Common myeloid progenitor, CD34-positive (primary cell): ENCODE measurements at regions of chr11 and their contacts with region 1.

Region 1: DNA sequence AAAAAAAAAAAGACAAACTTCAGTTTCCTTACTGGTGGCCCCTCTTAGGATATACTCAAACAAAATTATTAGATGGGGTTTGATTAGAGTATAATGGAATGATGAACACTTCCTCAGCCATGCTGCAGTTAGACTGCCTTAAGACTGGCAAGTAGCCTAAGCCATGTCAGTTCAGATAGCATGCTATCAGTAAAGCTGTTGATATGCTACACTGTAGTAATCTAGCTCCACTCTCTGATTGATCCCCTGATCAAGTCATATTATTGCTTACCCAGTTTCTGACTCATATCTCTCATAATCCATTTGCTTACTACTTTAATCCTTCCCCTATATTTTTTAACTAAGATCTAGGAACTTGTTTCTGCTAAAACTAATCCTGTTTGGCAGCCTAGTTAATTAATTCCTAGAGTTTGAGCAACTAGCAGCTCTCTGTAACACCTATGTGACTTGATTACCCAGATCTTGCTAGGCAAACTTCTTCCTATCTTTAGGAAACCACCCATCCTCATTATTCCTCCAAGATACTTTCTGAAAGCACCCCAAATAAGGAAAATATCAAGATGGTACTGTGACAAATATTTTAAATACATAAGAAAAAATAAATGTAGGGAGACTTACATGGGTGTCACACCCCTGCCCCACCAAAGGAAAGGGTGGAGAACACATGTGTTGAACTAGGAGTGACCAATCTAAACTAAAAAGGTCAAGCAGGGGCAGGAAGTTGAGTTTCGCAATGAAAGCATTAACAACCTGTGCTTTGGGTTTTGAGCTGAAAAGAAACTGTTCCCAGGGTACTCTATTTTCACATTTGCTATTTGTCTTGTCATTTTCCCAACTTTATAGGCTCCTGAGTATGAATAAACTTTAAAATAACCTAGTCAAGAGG is 43.2 kb downstream of the PIK3C2A start:
- DNase-seq: no peak
- H3K4me3 ChIP-seq: no peak overlapping the region
- H3K27ac ChIP-seq: no peak overlapping the region
- H3K4me1 ChIP-seq: peaks cover 12 to 57% (median 30%) of the 10 kb centered on the region in 4 experiments
- H3K27me3 ChIP-seq: no peaks in the 10 kb centered on the region

Region 2: GRCh38 chr11:17077240-17077519 is 87.4 kb before region 1 on chr11:
- CTCF ChIA-PET with region 1: no interaction called
- POLR2A ChIA-PET with region 1: no interaction called
- DNase-seq: peak; percentile 66 to 83 (median 75)
- H3K4me3 ChIP-seq: peak overlapping the region; percentile 86 to 100 (median 94)
- H3K27ac ChIP-seq: peak overlapping the region; percentile 95 to 98
- H3K4me1 ChIP-seq: peaks cover 11 to 30% (median 20%) of the 10 kb centered on the region in 4 experiments
- H3K27me3 ChIP-seq: no peaks in the 10 kb centered on the region

Region 3: DNA sequence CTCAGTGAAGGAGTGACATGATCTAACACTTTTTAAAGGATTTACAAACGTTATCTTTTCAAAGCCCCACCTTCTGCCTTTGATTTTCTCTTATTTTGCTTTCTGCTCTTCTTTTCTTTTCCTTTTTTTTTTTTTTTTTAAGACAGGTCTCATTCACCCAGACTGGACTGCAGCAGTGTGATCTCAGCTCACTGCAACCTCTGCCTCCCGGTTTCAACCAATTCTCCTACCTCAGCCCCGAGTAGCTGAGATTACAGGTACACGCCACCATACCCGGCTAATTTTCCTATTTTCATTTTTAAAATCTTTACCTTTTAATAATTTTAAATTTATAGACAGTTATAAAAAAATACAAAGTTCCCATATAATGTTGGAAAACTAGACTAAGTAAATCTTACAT is 23.4 kb before region 1 on chr11:
- CTCF ChIA-PET with region 1: no interaction called
- POLR2A ChIA-PET with region 1: interaction called, 11 read pairs
- DNase-seq: no peak
- H3K4me3 ChIP-seq: no peak overlapping the region
- H3K27ac ChIP-seq: no peak overlapping the region
- H3K4me1 ChIP-seq: no peaks in the 10 kb centered on the region
- H3K27me3 ChIP-seq: no peaks in the 10 kb centered on the region

Region 4: DNA sequence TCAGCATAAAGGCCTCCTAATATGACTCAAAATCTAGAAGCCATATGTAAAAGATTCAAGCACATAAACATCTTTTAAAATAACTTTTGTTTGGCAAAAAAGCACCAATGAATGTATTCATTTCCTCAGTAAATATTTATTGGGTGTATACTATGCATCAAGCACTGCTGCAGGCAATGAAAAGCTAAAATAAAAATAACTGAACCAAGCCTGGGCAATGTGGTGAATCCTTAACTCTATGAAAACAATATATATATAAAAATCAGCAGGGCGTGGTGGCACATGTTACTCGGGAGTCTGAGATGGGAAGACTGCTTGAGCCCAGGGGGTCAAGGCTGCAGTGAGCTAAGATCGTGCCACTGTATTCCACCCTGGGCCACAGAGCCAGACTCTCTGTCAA is 15.4 kb after region 1 on chr11:
- CTCF ChIA-PET with region 1: no interaction called
- POLR2A ChIA-PET with region 1: no interaction called
- DNase-seq: no peak
- H3K4me3 ChIP-seq: no peak overlapping the region
- H3K27ac ChIP-seq: no peak overlapping the region
- H3K4me1 ChIP-seq: no peaks in the 10 kb centered on the region
- H3K27me3 ChIP-seq: no peaks in the 10 kb centered on the region

Region 5: GRCh38 chr11:17328871-17329494 is 164.4 kb after region 1 on chr11:
- CTCF ChIA-PET with region 1: no interaction called
- POLR2A ChIA-PET with region 1: no interaction called
- DNase-seq: peak in 1 of 3 donors; percentile 6
- H3K4me3 ChIP-seq: no peak overlapping the region
- H3K27ac ChIP-seq: no peak overlapping the region
- H3K4me1 ChIP-seq: no peaks in the 10 kb centered on the region
- H3K27me3 ChIP-seq: no peaks in the 10 kb centered on the region